ENCODE measurements at regions of chr1 and their contacts with region 1.

Region 1: DNA sequence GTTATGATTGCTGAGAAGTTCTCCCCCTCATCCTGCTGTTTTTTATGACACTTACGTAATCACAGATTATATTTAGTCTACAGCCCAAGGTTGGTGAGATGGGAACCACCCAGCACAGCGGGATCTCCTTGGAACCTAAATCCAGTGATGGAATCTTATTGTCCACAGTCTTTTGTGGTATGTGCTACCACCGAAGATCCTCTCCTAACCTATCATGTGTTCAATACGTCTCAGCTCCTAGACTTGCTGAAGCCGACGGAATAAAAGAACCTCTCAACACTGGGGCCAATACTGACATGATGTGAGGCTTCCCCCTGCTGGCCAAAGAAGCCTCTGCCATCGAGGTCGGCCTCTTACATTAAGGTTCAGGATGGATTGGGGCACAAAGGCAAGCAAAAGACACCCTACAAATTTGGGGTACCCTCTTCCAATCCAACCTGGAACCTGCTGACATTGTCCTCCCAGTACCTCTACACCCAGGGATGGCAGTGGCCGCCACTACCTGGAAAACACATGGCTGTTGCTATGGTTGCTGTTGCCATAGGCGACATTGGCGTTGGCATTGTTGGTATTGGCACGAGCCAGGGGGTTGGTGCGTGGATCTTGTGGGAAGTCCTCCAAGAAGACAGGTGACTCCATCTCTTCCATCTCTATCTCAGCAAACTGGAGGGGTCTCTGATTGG is 19.4 kb upstream of the KIF21B start:
- DNase-seq: peak in 1 of 2 experiments; percentile 72
- H3K4me3 ChIP-seq: no peak overlapping the region
- H3K27ac ChIP-seq: no peak overlapping the region
- H3K4me1 ChIP-seq: no peaks in the 10 kb centered on the region
- H3K27me3 ChIP-seq: no peaks in the 10 kb centered on the region
- CTCF ChIP-seq: peak; percentile 88 to 98 (median 90)
- EP300 ChIP-seq: no peak
- POLR2A ChIP-seq: no peak
- RAD21 ChIP-seq: peak; percentile 94 to 95

Region 2: GRCh38 chr1:200856716-200857352 is 186.1 kb before region 1 on chr1:
- CTCF ChIA-PET with region 1: no interaction called
- POLR2A ChIA-PET with region 1: no interaction called
- DNase-seq: no peak
- H3K4me3 ChIP-seq: no peak overlapping the region
- H3K27ac ChIP-seq: no peak overlapping the region
- H3K4me1 ChIP-seq: no peaks in the 10 kb centered on the region
- H3K27me3 ChIP-seq: no peaks in the 10 kb centered on the region
- CTCF ChIP-seq: no peak
- EP300 ChIP-seq: no peak
- POLR2A ChIP-seq: no peak
- RAD21 ChIP-seq: no peak

Region 3: DNA sequence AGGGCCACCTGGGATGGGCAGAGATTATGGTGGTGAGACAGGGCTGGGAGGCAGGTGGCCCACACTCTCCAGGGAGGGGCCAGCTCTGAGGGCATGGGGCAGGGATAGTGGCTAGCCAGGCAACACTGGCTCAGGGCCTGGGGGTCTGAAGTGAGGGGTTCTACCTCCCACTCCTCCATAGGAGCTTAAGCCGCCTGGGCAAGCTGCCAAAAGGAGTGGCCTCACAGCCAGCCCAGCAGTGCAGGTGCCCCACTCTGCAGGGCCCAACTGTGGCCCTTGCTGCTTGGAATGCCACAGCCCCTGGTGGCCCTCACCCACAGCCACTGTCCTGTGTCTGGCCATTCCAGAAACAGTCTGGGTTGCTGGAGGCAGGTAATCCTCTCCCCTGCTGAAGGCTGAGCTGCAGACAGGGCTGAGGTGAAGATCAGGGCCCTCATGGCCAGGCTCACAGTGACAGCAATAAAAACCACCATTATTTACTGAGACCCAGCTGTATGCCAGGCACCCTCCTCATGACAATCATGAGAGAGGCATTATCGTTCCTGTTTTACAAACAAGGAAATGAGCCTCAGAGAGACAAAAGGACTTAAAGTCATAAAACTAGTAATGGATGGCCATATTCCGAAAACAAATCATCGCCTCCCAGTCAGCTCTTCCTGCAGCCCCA is 50.4 kb before region 1 on chr1:
- CTCF ChIA-PET with region 1: interaction called, 640 read pairs
- POLR2A ChIA-PET with region 1: no interaction called
- DNase-seq: no peak
- H3K4me3 ChIP-seq: no peak overlapping the region
- H3K27ac ChIP-seq: no peak overlapping the region
- H3K4me1 ChIP-seq: no peaks in the 10 kb centered on the region
- H3K27me3 ChIP-seq: no peaks in the 10 kb centered on the region
- CTCF ChIP-seq: no peak
- EP300 ChIP-seq: no peak
- POLR2A ChIP-seq: no peak
- RAD21 ChIP-seq: no peak

Region 4: GRCh38 chr1:201016211-201016651 is 26.7 kb before region 1 on chr1:
- CTCF ChIA-PET with region 1: interaction called, 274 read pairs
- POLR2A ChIA-PET with region 1: interaction called, 5 read pairs
- DNase-seq: no peak
- H3K4me3 ChIP-seq: no peak overlapping the region
- H3K27ac ChIP-seq: no peak overlapping the region
- H3K4me1 ChIP-seq: peaks cover 13 to 28% (median 19%) of the 10 kb centered on the region in 4 experiments
- H3K27me3 ChIP-seq: no peaks in the 10 kb centered on the region
- CTCF ChIP-seq: no peak
- EP300 ChIP-seq: no peak
- POLR2A ChIP-seq: no peak
- RAD21 ChIP-seq: no peak

Region 5: DNA sequence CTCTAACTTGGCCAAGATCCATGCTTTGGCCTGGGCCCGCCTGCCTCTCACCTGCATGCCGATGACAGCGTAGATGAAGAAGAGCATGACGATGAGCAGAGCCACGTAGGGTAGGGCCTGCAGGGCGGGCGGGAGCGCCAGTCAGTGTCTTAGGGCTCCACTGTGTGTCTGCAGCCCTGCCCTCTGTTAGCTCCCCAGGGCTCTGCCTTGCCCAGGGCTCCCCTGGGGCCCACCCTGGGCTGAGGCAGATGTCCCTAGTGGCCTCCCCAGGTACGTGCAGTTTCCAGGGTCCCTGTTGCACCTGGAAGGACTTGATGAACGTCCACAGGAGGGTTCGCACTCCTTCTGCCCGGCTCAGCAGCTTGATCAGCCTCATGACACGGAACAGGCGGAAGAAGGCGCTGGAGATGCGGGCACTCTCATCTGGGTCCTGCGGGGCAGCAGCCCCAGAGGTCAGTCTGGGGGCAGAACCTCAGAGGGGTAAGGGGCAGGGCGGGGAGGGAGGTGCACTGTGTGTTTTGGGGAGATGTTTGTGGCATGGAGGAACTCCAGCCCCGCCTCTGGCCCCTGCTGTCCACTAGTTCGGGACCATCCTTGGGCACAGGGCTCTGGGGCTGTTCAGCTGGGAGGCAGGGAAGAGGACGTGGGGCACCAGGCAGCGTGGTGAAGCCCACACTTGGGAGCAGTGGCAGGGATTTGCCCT is 10.4 kb after region 1 on chr1:
- CTCF ChIA-PET with region 1: interaction called, 32 read pairs
- POLR2A ChIA-PET with region 1: interaction called, 3 read pairs
- DNase-seq: no peak
- H3K4me3 ChIP-seq: no peak overlapping the region
- H3K27ac ChIP-seq: no peak overlapping the region
- H3K4me1 ChIP-seq: no peaks in the 10 kb centered on the region; a peak in 1 of 7 replicates
- H3K27me3 ChIP-seq: no peaks in the 10 kb centered on the region
- CTCF ChIP-seq: peak; percentile 22 to 53 (median 42); a peak in 3 of 4 replicates
- EP300 ChIP-seq: no peak
- POLR2A ChIP-seq: no peak
- RAD21 ChIP-seq: peak in 1 of 2 experiments; percentile 17; a peak in 1 of 4 replicates

Region 6: GRCh38 chr1:201059871-201060555 is 17.1 kb after region 1 on chr1:
- CTCF ChIA-PET with region 1: interaction called, 15 read pairs
- POLR2A ChIA-PET with region 1: no interaction called
- DNase-seq: no peak
- H3K4me3 ChIP-seq: no peak overlapping the region
- H3K27ac ChIP-seq: no peak overlapping the region
- H3K4me1 ChIP-seq: peaks cover 0 to 18% (median 10%) of the 10 kb centered on the region in 4 experiments; a peak in 6 of 7 replicates
- H3K27me3 ChIP-seq: no peaks in the 10 kb centered on the region
- CTCF ChIP-seq: no peak
- EP300 ChIP-seq: no peak
- POLR2A ChIP-seq: no peak
- RAD21 ChIP-seq: no peak

Region 7: GRCh38 chr1:201085916-201086735 is 43.2 kb after region 1 on chr1:
- CTCF ChIA-PET with region 1: interaction called, 12 read pairs
- POLR2A ChIA-PET with region 1: no interaction called
- DNase-seq: peak; percentile 25 to 81
- H3K4me3 ChIP-seq: no peak overlapping the region
- H3K27ac ChIP-seq: no peak overlapping the region
- H3K4me1 ChIP-seq: no peaks in the 10 kb centered on the region
- H3K27me3 ChIP-seq: no peaks in the 10 kb centered on the region
- CTCF ChIP-seq: peak; percentile 71 to 97 (median 86)
- EP300 ChIP-seq: no peak
- POLR2A ChIP-seq: no peak
- RAD21 ChIP-seq: peak; percentile 88 to 94

Region 8: GRCh38 chr1:201114236-201115131 is 71.6 kb after region 1 on chr1:
- CTCF ChIA-PET with region 1: interaction called, 10 read pairs
- POLR2A ChIA-PET with region 1: no interaction called
- DNase-seq: peak; percentile 90 to 91
- H3K4me3 ChIP-seq: peak overlapping the region; percentile 30 to 72 (median 50)
- H3K27ac ChIP-seq: no peak overlapping the region
- H3K4me1 ChIP-seq: peaks cover 0 to 5% (median under 1%) of the 10 kb centered on the region in 4 experiments; a peak in 1 of 7 replicates
- H3K27me3 ChIP-seq: peaks cover 9 to 27% (median 21%) of the 10 kb centered on the region in 4 experiments
- CTCF ChIP-seq: peak; percentile 86 to 96 (median 95)
- EP300 ChIP-seq: no peak
- POLR2A ChIP-seq: peak in 1 of 2 experiments; percentile 77; a peak in 2 of 3 replicates
- RAD21 ChIP-seq: peak; percentile 95 to 99

Region 9: GRCh38 chr1:201131398-201131797 is 88.5 kb after region 1 on chr1:
- CTCF ChIA-PET with region 1: no interaction called
- POLR2A ChIA-PET with region 1: no interaction called
- DNase-seq: no peak
- H3K4me3 ChIP-seq: no peak overlapping the region
- H3K27ac ChIP-seq: no peak overlapping the region
- H3K4me1 ChIP-seq: peaks cover 3 to 11% (median 9%) of the 10 kb centered on the region in 4 experiments
- H3K27me3 ChIP-seq: no peaks in the 10 kb centered on the region; a peak in 1 of 7 replicates
- CTCF ChIP-seq: no peak
- EP300 ChIP-seq: no peak
- POLR2A ChIP-seq: no peak
- RAD21 ChIP-seq: no peak

Region 10: GRCh38 chr1:201154389-201155165 is 111.7 kb after region 1 on chr1 and contains the start of gene TMEM9:
- CTCF ChIA-PET with region 1: no interaction called
- POLR2A ChIA-PET with region 1: no interaction called
- DNase-seq: peak; percentile 92 to 99
- H3K4me3 ChIP-seq: peak within 1 kb of the TSS; percentile 80 to 94 (median 82)
- H3K27ac ChIP-seq: peak within 1 kb of the TSS; percentile 74; the same call in 1 of the 2 replicates
- H3K4me1 ChIP-seq: peaks cover 0 to 13% (median 7%) of the 10 kb centered on the region in 4 experiments; a peak in 6 of 7 replicates
- H3K27me3 ChIP-seq: no peaks in the 10 kb centered on the region; a peak in 1 of 7 replicates
- CTCF ChIP-seq: no peak
- EP300 ChIP-seq: no peak
- POLR2A ChIP-seq: peak; percentile 20 to 67; a peak in 1 of 3 replicates
- RAD21 ChIP-seq: no peak
- total RNA-seq, gene TMEM9: 79.9 and 83.2 TPM in 2 replicates